ENCODE measurements at regions of chr20 and their contacts with region 1.

Region 1: DNA sequence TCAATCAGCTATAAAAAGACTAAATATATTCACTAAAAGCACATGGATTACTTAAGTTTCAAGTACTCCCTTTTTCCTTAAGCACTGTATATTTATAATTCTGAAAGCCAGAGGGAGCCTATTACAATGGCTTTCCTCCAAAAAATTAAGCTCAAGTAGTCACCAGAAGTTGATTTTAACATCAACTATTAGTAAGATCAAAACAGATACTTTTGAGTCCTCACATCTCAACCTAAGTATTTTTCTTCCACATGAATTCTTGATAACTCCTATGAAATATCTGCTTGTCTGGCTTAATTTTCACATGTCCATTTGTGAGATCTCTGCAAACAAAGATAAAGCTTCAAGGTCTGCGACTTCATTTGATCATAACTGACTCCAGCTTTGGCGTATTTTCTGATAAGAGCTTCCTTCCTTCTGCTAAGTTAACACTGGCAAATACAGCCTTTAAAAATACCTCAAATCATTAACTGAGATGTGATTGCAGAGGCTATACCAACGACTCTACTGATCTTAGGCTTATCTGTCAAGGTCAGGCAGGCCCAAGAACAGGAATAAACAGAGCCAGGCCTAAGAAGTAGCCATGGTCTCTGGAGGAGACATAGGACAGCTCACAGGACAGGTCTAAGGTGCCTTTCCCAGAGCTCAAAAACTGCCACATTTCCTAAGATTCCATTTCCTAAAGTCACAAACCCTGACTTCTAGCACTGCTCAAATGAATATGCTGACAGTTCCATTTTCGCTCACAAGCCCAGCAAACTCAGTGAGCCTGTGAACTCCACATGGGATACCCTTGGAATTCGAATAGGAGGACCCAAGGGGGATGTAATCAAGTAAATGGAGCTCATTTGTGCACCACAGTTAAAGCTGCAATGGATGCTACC is 10.0 kb downstream of the SNX5 start:
- DNase-seq: no peak
- H3K4me3 ChIP-seq: no peak overlapping the region
- CTCF ChIP-seq: no peak

Region 2: GRCh38 chr20:17946572-17947473 is 11.8 kb before region 1 on chr20:
- CTCF ChIA-PET with region 1: interaction called, 19 read pairs
- POLR2A ChIA-PET with region 1: no interaction called
- DNase-seq: no peak
- H3K4me3 ChIP-seq: no peak overlapping the region
- CTCF ChIP-seq: no peak

Region 3: DNA sequence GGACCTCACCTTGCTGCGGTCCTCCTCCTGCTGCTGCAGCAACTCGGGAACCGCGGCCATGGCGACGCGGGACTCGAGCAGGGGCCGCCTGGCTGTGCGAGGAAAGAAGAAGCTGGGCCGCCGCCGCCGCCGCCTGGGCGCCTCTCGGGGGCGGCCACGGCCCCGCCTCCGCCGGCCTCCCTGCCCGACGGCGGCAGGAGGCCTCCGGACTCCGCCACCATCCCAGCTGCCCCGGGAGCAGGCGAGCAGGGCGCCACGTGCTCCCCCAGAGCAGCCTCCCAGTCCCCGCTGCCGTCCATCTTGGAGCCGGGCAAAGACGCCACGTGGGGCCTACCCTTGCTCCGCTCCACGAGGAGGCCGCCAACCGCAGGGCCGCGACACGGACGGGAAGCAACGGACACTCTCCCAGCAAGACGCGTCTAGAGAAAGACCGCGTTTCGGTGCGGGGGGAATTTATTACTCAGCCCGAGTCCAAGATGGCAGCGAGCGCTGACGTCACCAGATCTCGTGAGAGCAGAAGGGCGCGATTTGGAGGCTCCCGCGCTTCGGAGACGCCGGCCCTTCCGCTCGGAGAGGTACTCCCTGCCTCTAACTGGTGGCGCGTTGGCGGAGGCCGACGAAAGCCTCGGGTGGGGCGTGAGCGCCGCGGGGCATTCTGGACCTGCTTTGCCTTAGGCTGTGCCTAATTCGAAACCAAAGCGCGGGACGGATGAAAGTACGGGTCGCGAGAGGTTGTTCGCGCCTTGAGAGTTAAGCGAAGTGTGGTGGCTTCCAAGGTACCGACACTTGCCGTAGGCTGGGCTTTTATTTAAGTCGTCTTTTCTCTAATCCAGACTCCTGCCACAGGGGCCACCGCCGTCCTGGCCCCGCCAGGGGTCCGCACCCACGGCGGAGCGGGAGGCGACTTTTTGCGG is 10.0 kb after region 1 on chr20 and contains the starts of genes MGME1 and SNX5:
- CTCF ChIA-PET with region 1: interaction called, 19 read pairs
- POLR2A ChIA-PET with region 1: interaction called, 6 read pairs
- DNase-seq: peak; percentile 95
- H3K4me3 ChIP-seq: peak within 1 kb of the TSS; percentile 93
- CTCF ChIP-seq: no peak

Measured in AG04449 (cell line).